Activated B cell treated with CpG ODN at 0.5 μM for 24 hours (primary cell): ENCODE measurements at regions of chr1 and their contacts with region 1.

Region 1: GRCh38 chr1:115138968-115139367 is 49.7 kb upstream of the TSPAN2 start:
- DNase-seq: peak; percentile 34
- ATAC-seq: peak; percentile 71
- H3K4me3 Mint-ChIP-seq: peak overlapping the region; percentile 9
- H3K27ac Mint-ChIP-seq: no peak overlapping the region
- H3K4me1 Mint-ChIP-seq: peaks cover 3% of the 10 kb centered on the region
- H3K27me3 Mint-ChIP-seq: peaks cover 26% of the 10 kb centered on the region
- CTCF ChIP-seq: no peak

Region 2: GRCh38 chr1:115170961-115171392 is 32.0 kb after region 1 on chr1:
- CTCF ChIA-PET with region 1: no interaction called
- POLR2A ChIA-PET with region 1: no interaction called
- intact Hi-C with region 1: no loop called
- DNase-seq: no peak
- ATAC-seq: no peak
- H3K4me3 Mint-ChIP-seq: no peak overlapping the region
- H3K27ac Mint-ChIP-seq: no peak overlapping the region
- H3K4me1 Mint-ChIP-seq: no peaks in the 10 kb centered on the region
- H3K27me3 Mint-ChIP-seq: peaks cover 5% of the 10 kb centered on the region
- CTCF ChIP-seq: no peak

Region 3: GRCh38 chr1:115595279-115596079 is 456.5 kb after region 1 on chr1:
- CTCF ChIA-PET with region 1: interaction called, 21 read pairs
- POLR2A ChIA-PET with region 1: no interaction called
- intact Hi-C with region 1: no loop called
- DNase-seq: peak; percentile 31
- ATAC-seq: no peak
- H3K4me3 Mint-ChIP-seq: no peak overlapping the region
- H3K27ac Mint-ChIP-seq: no peak overlapping the region
- H3K4me1 Mint-ChIP-seq: no peaks in the 10 kb centered on the region
- H3K27me3 Mint-ChIP-seq: peaks cover 3% of the 10 kb centered on the region
- CTCF ChIP-seq: peak; percentile 56

Region 4: DNA sequence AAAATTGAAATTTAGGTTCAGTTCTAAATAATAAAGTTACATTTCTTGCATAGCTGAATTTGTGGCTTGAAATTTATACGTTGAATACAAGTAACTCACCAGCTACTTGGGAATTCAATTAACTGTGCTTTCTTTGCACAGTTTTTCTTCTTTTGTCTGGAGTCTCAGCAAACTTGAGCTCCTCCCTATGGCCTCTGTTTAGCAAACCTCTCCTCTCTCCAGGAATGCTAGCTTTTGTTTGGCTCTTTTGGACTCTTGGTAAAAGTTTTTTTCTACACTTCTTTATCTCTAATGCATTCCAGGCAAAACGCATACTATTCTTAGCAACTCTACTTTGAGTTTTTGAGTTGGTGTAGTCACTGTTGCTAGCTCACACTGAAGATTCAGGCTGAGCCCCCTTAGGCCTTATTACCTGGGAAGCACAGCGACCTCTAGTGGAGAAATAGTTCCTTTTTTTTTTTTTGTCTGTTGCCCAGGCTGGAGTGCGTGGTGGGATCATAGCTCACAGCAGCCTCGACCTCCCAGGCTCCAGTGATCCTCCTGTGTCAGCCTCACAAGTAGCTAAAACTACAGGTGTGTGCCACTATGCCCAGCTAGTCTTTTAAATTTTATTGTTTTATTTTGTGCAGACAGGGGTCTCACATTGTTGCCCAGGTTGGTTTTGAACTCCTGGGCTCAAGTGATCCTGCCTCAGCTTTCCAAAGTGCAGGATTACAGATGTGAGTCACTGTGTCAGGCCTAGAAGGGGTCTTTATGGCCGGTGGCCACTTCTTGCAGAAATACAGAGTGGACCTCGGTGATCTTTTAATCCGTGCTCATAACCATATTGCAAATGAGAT is 567.8 kb after region 1 on chr1:
- CTCF ChIA-PET with region 1: interaction called, 3 read pairs
- POLR2A ChIA-PET with region 1: no interaction called
- intact Hi-C with region 1: loop called (anchors 5 kb)
- DNase-seq: no peak
- ATAC-seq: no peak
- H3K4me3 Mint-ChIP-seq: no peak overlapping the region
- H3K27ac Mint-ChIP-seq: no peak overlapping the region
- H3K4me1 Mint-ChIP-seq: no peaks in the 10 kb centered on the region
- H3K27me3 Mint-ChIP-seq: peaks cover 10% of the 10 kb centered on the region
- CTCF ChIP-seq: no peak

Region 5: DNA sequence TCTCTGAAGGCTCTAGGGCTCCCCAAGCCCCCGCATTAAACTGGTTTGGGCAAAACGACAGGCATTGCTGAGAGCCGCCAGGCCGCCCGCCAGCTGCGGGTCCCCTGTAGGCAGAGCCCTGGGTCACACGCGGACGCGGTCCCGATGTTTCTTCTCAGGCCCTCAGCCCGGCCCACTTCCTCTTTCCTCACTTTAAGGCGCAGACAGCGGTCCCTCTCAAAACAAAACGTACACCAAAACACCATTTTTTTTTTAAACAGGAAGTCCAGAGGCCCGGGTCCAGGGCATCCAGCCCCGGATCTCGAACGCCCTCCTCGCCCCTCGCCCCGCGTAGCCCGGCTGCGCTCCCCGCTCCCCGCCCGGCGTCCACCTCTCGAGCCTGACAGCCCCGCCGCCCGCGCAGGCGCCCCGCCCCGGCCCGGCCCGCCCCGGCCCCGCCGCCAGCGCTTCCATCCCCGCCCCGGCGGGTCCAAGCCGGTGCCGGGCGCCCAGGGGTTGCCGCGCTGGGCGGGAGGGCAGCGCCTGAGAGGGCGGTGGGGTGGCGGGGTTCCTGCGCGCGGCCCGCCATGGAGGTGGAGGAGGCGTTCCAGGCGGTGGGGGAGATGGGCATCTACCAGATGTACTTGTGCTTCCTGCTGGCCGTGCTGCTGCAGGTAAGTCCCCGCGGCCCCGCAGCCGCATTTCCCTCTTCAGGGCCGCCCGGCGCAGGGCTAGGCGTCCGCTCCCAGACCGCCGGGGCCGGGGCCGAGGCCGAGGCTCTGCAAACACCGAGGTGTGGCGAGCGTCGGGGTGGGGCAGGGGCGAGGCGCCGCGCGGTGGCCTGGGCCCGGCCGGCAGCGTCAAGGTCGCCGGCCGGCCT is 837.3 kb after region 1 on chr1 and contains the start of gene SLC22A15:
- CTCF ChIA-PET with region 1: interaction called, 4 read pairs
- POLR2A ChIA-PET with region 1: no interaction called
- intact Hi-C with region 1: loop called (anchors 1 kb)
- DNase-seq: peak; percentile 63
- ATAC-seq: peak; percentile 90
- H3K4me3 Mint-ChIP-seq: peak within 1 kb of the TSS; percentile 82
- H3K27ac Mint-ChIP-seq: peak within 1 kb of the TSS; percentile 71
- H3K4me1 Mint-ChIP-seq: peaks cover 16% of the 10 kb centered on the region
- H3K27me3 Mint-ChIP-seq: peaks cover 3% of the 10 kb centered on the region
- CTCF ChIP-seq: no peak
- total RNA-seq, gene SLC22A15: 4.1 and 4.6 TPM in 2 replicates